ENCODE measurements at regions of chr4 and their contacts with region 1.

Region 1: GRCh38 chr4:102322736-102323135 is 22.5 kb downstream of the SLC39A8 start:
- DNase-seq: no peak
- H3K4me3 Mint-ChIP-seq: no peak overlapping the region
- H3K27ac Mint-ChIP-seq: no peak overlapping the region
- H3K4me1 Mint-ChIP-seq: peaks cover 58% of the 10 kb centered on the region
- H3K27me3 Mint-ChIP-seq: no peaks in the 10 kb centered on the region

Region 2: DNA sequence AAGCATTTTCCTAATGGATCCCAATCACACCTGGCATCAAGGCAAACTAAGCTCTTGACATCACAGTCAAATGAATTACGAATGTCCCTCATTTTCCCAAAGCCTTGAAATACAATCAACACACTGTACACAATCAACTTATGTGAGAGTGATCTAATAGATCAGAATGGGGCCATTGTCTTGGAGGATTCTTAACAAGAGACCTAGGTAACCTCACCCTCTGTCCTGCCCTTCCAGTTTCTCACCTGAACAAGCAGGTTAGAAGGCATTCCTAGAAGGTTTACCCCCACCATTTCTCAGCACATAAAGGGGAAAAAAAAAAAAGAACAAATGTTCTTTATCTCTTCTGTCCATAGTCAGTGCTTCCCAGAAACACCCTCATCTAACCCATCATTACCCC is 16.3 kb after region 1 on chr4:
- intact Hi-C with region 1: loop called (anchors 2 kb)
- DNase-seq: no peak
- H3K4me3 Mint-ChIP-seq: no peak overlapping the region
- H3K27ac Mint-ChIP-seq: no peak overlapping the region
- H3K4me1 Mint-ChIP-seq: peaks cover 62% of the 10 kb centered on the region
- H3K27me3 Mint-ChIP-seq: no peaks in the 10 kb centered on the region

Region 3: DNA sequence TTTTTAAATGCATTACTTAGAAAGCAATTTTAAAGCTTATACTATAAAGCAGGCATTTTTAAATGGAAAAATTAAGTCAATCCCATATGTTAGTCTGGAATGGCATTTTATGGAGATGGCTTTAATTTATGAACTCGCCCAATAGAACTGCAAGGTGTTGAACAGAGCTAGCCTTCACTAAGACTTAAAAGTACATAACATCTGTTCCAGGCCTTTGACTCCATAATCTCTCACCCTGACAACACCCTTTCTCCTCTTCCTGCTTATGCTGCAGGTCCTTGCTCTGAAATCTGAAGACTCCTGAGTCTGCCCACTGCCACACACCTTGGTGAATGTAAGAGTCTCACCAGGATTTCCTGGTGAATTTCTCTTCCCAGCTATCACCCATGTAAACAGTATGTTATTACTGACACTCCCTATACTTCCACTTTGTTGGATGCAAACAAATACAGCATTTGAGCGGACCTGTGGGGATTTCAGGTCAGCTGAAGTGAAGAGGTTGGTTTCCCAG is 40.2 kb after region 1 on chr4:
- intact Hi-C with region 1: no loop called
- DNase-seq: no peak
- H3K4me3 Mint-ChIP-seq: no peak overlapping the region
- H3K27ac Mint-ChIP-seq: no peak overlapping the region
- H3K4me1 Mint-ChIP-seq: peaks cover under 1% of the 10 kb centered on the region
- H3K27me3 Mint-ChIP-seq: peaks cover 11% of the 10 kb centered on the region

Measured in activated T-helper 2 cell treated with anti-CD3 and anti-CD28 coated beads, Interferon-gamma antibody, Interleukin-2, Interleukin-4, amounts not matched to agents 10 μg/mL and 5 μg/mL and 100 μg/mL, durations not matched to agents 14 hours and 24 hours and 36 hours (primary cell).